ENCODE measurements at regions of chr3 and their contacts with region 1.

Region 1: GRCh38 chr3:194682694-194683310 is 2.9 kb upstream of the FAM43A start:
- DNase-seq: peak; percentile 61
- H3K4me3 Mint-ChIP-seq: no peak overlapping the region
- H3K27ac Mint-ChIP-seq: no peak overlapping the region
- H3K4me1 Mint-ChIP-seq: peaks cover 39% of the 10 kb centered on the region
- H3K27me3 Mint-ChIP-seq: peaks cover 30% of the 10 kb centered on the region

Region 2: DNA sequence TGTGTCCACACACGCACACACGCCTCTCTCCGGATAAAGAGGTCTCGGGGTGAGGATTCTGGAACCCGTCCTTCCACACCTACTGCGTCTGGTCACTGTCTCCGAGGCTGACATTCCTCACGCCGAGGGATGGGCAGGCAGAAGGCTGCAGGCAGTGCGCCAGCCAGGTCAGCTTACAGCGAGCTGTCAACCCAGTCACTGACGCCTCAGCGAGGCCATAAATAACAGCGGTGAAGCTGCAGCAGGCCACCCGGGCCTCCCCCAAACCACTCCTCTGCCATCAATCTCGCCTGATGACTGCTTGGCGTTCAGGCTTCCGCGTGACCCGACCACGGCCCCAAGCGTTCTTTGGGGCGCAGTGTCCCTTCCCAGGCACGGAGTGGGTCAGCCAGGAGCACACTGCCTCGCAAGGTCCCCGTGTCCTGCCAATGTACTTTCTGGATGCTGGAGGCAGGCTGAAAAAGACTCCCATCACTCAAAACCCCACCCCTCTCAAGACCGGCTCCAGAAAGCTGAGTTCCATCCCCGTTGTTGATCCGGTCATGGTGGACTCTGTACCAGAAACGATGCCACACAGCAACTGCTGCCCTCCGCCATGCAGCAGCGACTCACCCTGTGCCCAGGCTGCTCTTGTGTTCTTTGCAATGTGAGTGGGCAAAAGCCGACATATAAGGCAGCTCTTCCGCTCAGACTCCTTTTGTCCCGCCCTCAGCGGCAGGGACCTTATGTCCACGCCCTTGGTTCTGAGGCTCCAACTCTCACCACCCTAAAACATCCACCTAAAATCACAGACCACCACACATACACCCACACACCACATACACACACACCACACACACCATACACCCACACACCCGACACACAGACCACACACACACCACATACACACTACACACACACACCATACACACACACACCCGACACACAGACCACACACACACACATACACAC is 358.7 kb before region 1 on chr3:
- intact Hi-C with region 1: no loop called
- DNase-seq: no peak
- H3K4me3 Mint-ChIP-seq: no peak overlapping the region
- H3K27ac Mint-ChIP-seq: no peak overlapping the region
- H3K4me1 Mint-ChIP-seq: peaks cover 5% of the 10 kb centered on the region
- H3K27me3 Mint-ChIP-seq: peaks cover 22% of the 10 kb centered on the region

Region 3: GRCh38 chr3:194395778-194396547 is 286.8 kb before region 1 on chr3:
- intact Hi-C with region 1: loop called (anchors 5 kb)
- DNase-seq: peak; percentile 48
- H3K4me3 Mint-ChIP-seq: peak overlapping the region; percentile 71
- H3K27ac Mint-ChIP-seq: peak overlapping the region; percentile 55
- H3K4me1 Mint-ChIP-seq: peaks cover 34% of the 10 kb centered on the region
- H3K27me3 Mint-ChIP-seq: peaks cover 37% of the 10 kb centered on the region

Region 4: GRCh38 chr3:194769020-194769643 is 86.3 kb after region 1 on chr3:
- intact Hi-C with region 1: loop called (anchors 2 kb)
- DNase-seq: peak; percentile 85
- H3K4me3 Mint-ChIP-seq: peak overlapping the region; percentile 77
- H3K27ac Mint-ChIP-seq: peak overlapping the region; percentile 43
- H3K4me1 Mint-ChIP-seq: peaks cover 11% of the 10 kb centered on the region
- H3K27me3 Mint-ChIP-seq: peaks cover 31% of the 10 kb centered on the region

Region 5: DNA sequence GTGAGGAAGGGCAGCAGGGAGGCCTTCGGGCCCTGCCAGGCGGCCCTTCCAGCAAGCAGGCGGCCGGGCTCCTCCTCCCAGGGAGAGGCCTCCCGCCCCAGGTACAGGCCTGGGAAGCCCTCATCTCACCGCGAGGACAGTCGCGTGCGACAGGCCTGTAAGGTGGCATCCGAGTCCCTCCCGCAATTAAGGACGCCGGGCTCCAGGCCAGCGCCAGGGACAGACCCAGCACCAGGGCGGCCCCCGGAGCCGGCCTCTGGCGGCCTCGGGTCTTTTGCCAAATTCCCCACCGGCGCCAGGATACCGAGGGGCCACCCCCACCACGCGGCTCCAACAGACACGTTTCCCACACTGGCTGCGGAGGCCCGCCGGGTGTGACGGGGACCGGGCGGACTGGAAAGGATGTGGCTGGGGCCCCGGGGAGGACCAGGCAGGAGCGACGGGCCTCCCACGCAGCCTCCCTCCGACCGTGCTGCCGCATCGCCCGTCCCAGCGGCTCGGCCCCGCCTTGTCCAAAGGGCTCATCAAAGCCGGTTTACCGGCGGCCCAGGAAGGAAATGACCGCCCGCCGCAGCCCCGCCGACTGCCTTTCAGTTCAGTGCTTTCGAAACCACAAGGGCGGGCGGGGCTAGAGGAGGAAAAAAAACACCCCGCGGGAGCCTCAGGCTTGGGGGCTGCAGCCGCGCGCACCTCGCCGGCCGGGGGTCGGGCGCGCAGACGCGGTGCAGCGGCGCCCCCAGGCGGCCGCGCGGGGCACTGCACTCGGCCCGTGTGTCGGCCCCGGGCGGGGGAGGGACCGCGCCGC is 576.9 kb after region 1 on chr3:
- intact Hi-C with region 1: loop called (anchors 2 kb)
- DNase-seq: peak; percentile 80
- H3K4me3 Mint-ChIP-seq: peak overlapping the region; percentile 55
- H3K27ac Mint-ChIP-seq: peak overlapping the region; percentile 38
- H3K4me1 Mint-ChIP-seq: peaks cover 29% of the 10 kb centered on the region
- H3K27me3 Mint-ChIP-seq: no peaks in the 10 kb centered on the region

Region 6: DNA sequence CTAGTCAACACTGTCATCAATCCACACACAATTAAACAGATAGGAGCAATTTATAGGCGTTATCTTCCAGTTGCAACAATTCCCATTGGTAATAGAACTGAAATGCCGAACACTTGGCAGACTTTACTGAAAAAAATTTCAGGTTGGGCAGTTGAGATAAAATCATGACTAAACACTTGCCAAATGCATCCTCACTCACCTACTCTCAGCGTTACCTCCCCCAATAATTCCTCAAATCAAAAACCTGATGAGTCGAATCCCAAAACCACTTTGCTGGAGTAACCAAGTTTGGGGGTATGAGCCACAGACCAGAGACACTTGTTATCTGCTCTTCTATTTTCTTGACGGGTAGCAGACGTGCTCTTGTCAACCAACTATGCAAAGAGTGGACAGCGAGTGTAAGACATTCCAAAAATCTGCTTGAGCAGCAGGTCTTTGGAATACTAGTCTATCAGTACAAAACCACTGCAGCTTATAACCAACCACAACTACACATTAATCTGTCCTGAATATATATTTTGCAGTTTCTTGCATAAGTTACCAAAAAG is 830.1 kb after region 1 on chr3:
- intact Hi-C with region 1: loop called (anchors 10 kb)
- DNase-seq: no peak
- H3K4me3 Mint-ChIP-seq: no peak overlapping the region
- H3K27ac Mint-ChIP-seq: no peak overlapping the region
- H3K4me1 Mint-ChIP-seq: peaks cover 17% of the 10 kb centered on the region
- H3K27me3 Mint-ChIP-seq: no peaks in the 10 kb centered on the region

Measured in activated T-helper 2 cell treated with anti-CD3 and anti-CD28 coated beads, Interferon-gamma antibody, Interleukin-2, Interleukin-4, amounts not matched to agents 10 μg/mL and 5 μg/mL and 100 μg/mL, durations not matched to agents 14 hours and 24 hours and 36 hours (primary cell).